HEK293T (cell line): ENCODE measurements at regions of chr19 and their contacts with region 1.

Region 1: DNA sequence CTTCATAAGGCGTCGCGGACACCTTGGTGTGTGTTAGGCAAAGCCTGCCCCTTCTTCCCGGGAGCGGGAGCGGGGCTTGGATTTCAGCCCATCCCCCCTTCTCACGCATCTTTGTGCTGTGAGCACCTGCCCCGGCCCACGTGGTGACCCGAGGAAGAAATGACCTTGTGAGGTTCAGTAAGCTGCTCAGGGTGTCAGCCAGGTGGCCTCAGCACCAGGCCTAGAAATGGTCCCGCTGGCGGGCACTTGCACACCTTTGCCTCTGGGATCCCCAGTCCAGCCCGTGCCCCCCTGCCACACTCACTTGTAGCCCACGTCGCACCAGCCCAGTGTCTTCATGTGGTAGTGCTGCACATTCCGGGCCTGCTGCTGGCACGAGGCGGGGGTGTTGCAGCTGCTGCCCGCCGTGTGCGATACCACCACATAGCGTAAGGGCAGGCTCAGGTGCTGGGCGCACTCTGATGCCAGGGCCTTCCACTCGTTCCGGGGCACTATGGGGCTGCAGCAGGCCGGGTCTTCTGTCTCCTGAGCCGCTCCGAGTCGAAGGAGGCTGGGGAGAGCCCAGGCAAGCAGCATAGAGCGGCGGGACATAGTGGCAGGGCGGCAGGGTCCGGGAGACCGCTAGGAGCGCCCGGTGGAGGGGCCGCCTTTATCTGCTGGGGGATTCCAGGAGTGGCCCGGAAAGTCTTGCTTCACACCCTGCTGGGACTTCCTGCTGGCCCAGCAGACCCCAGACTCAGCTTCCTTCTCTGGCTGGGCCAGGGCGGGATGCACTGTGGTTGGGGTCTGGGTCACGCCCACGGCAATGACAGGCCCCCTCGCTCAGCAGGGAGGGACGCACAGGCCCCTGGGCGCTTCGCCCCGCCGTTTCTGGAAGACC is at the start of gene PGLYRP1:
- DNase-seq: no peak

Region 2: DNA sequence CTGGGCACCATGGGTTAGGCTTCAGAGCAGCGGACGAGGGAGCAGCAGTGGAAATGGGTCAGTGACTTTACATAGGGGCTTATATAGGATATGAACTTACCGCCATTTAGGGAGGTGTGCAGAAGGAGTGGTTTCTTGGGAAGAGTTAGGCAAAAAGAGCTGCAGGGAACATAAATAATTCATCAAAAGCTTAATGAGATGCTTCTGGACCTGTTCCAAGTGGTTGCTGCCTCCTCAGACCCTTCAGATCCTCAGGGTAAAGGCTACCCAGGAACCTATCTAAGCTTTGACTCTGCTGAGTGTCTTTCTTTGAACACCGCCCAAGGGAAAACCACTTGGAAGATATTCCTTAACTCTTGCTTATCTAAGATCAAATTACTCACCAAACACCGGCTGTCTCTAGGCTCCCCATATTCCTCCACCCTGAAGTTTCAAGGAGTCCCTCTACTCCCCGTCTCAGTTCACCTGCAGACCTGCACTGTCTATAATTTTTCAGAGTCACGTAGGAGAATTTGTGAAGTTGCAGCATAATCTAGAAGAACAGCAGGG is 18.4 kb after region 1 on chr19 and contains the start of gene IGFL4:
- CTCF ChIA-PET with region 1: interaction called, 16 read pairs
- POLR2A ChIA-PET with region 1: no interaction called
- DNase-seq: peak; percentile 34

Region 3: DNA sequence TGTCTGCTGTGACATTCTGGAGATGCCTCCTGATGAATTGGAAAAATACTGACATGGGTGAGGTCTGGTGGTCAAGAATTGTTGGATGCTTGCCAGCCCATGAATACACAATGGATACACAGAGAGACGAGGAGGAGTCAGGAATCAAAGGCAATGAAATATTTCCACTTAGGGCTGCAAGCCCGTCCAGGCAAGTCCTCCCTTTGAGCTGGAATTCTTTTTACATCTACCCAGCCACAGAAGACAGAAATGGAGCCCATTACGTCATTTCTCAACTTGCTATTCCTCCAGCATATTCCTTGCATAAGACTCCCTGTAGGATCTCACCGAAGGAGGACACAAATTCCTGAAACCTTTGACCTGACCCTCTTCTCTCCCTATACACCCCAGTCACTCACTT is 33.9 kb after region 1 on chr19:
- CTCF ChIA-PET with region 1: no interaction called
- POLR2A ChIA-PET with region 1: no interaction called
- DNase-seq: no peak